Calu3 (cell line): ENCODE measurements at regions of chr12 and their contacts with region 1.

Region 1: GRCh38 chr12:117321572-117321971 is 39.9 kb downstream of the NOS1 start:
- DNase-seq: no peak
- H3K4me3 Mint-ChIP-seq: no peak overlapping the region
- H3K27ac Mint-ChIP-seq: no peak overlapping the region
- H3K4me1 Mint-ChIP-seq: no peaks in the 10 kb centered on the region
- H3K27me3 Mint-ChIP-seq: peaks cover 95% of the 10 kb centered on the region
- CTCF ChIP-seq: no peak

Region 2: GRCh38 chr12:117344716-117345115 is 23.1 kb after region 1 on chr12:
- CTCF ChIA-PET with region 1: interaction called, 10 read pairs
- intact Hi-C with region 1: no loop called
- DNase-seq: no peak
- H3K4me3 Mint-ChIP-seq: no peak overlapping the region
- H3K27ac Mint-ChIP-seq: no peak overlapping the region
- H3K4me1 Mint-ChIP-seq: peaks cover 14% of the 10 kb centered on the region
- H3K27me3 Mint-ChIP-seq: peaks cover 44% of the 10 kb centered on the region
- CTCF ChIP-seq: no peak

Region 3: GRCh38 chr12:117587631-117588287 is 266.2 kb after region 1 on chr12:
- CTCF ChIA-PET with region 1: no interaction called
- intact Hi-C with region 1: no loop called
- DNase-seq: peak; percentile 77
- H3K4me3 Mint-ChIP-seq: no peak overlapping the region
- H3K27ac Mint-ChIP-seq: no peak overlapping the region
- H3K4me1 Mint-ChIP-seq: no peaks in the 10 kb centered on the region
- H3K27me3 Mint-ChIP-seq: peaks cover 56% of the 10 kb centered on the region
- CTCF ChIP-seq: peak; percentile 90